Vagina (tissue), 2 donors: ENCODE measurements at regions of chr14 and their contacts with region 1.

Region 1: DNA sequence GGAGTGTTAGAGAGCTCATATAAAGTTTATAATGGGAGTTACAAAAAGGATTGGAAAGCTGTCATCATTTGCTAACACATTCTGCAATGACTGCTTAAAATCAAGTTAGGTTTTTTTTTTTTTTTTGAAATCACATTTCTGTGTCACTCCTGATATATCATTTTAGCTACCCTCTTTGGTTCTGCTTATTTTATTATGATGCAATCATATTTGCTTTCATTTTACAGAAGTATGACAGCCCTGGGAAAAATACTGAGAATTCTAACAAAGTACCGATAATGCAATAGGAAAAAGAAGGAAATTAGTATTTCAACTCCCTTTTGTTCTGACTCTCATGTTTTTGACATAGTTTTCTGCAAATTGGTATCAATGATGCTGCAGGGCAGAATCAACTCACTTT is 71.6 kb upstream of the MDGA2 start:
- DNase-seq: no peak
- H3K4me3 ChIP-seq: no peak overlapping the region
- H3K27ac ChIP-seq: no peak overlapping the region
- H3K4me1 ChIP-seq: no peaks in the 10 kb centered on the region
- H3K27me3 ChIP-seq: no peaks in the 10 kb centered on the region
- CTCF ChIP-seq: no peak
- POLR2A ChIP-seq: no peak

Region 2: GRCh38 chr14:47346849-47347248 is 400.1 kb before region 1 on chr14:
- intact Hi-C with region 1: loop called (anchors 5 kb)
- DNase-seq: no peak
- H3K4me3 ChIP-seq: no peak overlapping the region
- H3K27ac ChIP-seq: no peak overlapping the region
- H3K4me1 ChIP-seq: no peaks in the 10 kb centered on the region
- H3K27me3 ChIP-seq: no peaks in the 10 kb centered on the region
- CTCF ChIP-seq: no peak
- POLR2A ChIP-seq: no peak

Region 3: GRCh38 chr14:47442209-47442608 is 304.8 kb before region 1 on chr14:
- intact Hi-C with region 1: no loop called
- DNase-seq: no peak
- H3K4me3 ChIP-seq: no peak overlapping the region
- H3K27ac ChIP-seq: no peak overlapping the region
- H3K4me1 ChIP-seq: no peaks in the 10 kb centered on the region
- H3K27me3 ChIP-seq: no peaks in the 10 kb centered on the region
- CTCF ChIP-seq: no peak
- POLR2A ChIP-seq: no peak

Region 4: GRCh38 chr14:47763188-47763854 is 16.3 kb after region 1 on chr14:
- intact Hi-C with region 1: no loop called
- DNase-seq: no peak
- H3K4me3 ChIP-seq: no peak overlapping the region
- H3K27ac ChIP-seq: no peak overlapping the region
- H3K4me1 ChIP-seq: no peaks in the 10 kb centered on the region
- H3K27me3 ChIP-seq: no peaks in the 10 kb centered on the region
- CTCF ChIP-seq: no peak
- POLR2A ChIP-seq: no peak